B cell (primary cell): ENCODE measurements at regions of chr7 and their contacts with region 1.

Region 1: DNA sequence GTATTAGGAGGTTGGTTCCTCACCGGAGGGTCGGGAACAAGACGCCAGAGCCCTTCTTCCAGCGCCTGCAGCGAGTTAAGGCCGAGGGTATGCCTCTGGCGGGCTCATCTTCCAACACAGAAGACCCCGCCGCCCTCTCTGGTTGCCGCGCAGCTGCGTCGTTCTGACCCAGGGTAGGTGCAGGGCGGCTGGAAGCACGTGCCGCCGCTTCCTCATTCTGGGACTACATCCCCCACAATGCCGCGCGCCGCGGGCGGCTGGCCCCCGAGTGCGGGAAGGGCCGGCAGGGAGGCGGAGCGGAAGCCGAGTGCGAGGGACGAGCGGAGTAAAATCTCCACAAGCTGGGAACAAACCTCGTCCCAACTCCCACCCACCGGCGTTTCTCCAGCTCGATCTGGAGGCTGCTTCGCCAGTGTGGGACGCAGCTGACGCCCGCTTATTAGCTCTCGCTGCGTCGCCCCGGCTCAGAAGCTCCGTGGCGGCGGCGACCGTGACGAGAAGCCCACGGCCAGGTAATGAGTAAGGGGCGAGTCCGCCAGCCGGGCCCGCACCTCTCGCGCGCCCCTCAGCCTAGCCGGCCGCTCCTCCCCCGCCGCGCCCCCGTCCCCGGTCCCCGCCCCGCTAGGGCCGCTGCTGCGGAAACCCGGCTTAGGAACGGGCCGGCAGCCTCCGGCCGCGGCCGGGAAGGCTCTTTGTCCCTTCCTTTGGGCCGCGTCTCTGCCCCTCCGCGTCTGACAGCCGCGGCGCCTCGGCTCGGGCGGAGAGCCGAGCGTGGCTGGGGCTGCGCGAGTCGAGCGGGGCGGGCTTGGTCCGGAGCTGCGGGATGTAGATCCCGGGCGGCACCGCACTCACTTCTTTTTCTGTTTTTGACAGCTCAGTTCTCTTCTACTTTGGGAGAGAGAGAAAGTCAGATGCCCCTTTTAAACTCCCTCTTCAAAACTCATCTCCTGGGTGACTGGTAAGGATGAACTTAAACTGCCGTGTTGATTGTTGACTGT is at the start of gene CCDC126:
- DNase-seq: peak; percentile 89
- ATAC-seq: peak; percentile 92
- H3K4me3 ChIP-seq: peak within 1 kb of the TSS; percentile 79 to 93 (median 88)
- H3K4me3 Mint-ChIP-seq: peak within 1 kb of the TSS; percentile 91
- H3K27ac ChIP-seq: peak within 1 kb of the TSS; percentile 70 to 80
- H3K27ac Mint-ChIP-seq: peak within 1 kb of the TSS; percentile 80
- H3K4me1 ChIP-seq: peaks cover 15 to 58% of the 10 kb centered on the region in 2 donors
- H3K4me1 Mint-ChIP-seq: peaks cover 41% of the 10 kb centered on the region
- H3K27me3 ChIP-seq: no peaks in the 10 kb centered on the region
- H3K27me3 Mint-ChIP-seq: no peaks in the 10 kb centered on the region
- CTCF ChIP-seq: no peak
- total RNA-seq, gene CCDC126: 15.0 and 18.0 TPM in 2 replicates

Region 2: GRCh38 chr7:21945454-21946227 is 1651.8 kb before region 1 on chr7 and contains the start of gene CDCA7L:
- CTCF ChIA-PET with region 1: no interaction called
- POLR2A ChIA-PET with region 1: no interaction called
- intact Hi-C with region 1: loop called (anchors 5 kb)
- DNase-seq: peak; percentile 96
- ATAC-seq: peak; percentile 80
- H3K4me3 ChIP-seq: peak within 1 kb of the TSS; percentile 74 to 95 (median 81)
- H3K4me3 Mint-ChIP-seq: peak within 1 kb of the TSS; percentile 97
- H3K27ac ChIP-seq: peak within 1 kb of the TSS; percentile 97 to 98
- H3K27ac Mint-ChIP-seq: peak within 1 kb of the TSS; percentile 99
- H3K4me1 ChIP-seq: peaks cover 56 to 63% of the 10 kb centered on the region in 2 donors
- H3K4me1 Mint-ChIP-seq: peaks cover 65% of the 10 kb centered on the region
- H3K27me3 ChIP-seq: no peaks in the 10 kb centered on the region
- H3K27me3 Mint-ChIP-seq: no peaks in the 10 kb centered on the region
- CTCF ChIP-seq: peak; percentile 17
- total RNA-seq, gene CDCA7L: 126 and 129 TPM in 2 replicates

Region 3: DNA sequence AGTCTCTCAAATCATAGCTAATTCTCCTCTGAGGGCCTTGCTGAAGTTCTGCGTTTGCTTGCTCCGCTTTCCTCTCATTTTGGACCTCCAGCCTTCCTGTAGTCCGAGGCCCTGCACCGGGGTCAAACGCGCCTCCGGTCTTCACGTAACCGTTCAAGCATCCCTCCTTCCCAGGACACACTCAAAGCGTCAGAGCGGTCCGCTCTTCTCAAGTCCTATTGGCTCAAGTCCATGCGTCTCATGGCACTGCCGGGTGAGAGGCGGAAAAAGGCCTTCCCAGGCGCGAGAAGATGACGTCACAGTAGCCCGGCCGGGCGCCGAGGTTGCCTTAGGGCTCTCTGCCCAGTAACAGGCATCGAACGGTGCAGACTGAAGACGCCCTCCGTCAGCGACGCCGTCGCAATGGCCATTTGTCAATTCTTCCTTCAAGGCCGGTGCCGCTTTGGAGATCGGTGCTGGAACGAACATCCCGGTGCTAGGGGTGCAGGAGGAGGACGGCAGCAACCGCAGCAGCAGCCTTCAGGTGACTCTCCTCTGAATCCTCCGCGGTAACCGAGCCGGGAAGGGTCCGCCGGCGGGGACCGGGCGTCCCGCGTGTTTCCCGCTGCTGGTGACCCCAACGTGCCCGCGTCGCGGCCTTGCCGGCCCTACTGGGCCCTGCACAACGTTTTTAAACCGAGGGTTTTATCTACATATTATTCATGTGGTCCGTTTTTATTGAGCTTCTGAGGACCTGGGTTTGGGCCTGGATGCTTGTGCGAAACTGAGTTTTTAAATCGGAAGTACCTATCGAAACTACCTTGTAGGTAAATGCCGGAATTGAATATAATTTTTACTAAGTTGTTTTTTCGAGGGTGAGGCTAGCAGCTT is 415.5 kb before region 1 on chr7 and contains the start of gene NUP42:
- CTCF ChIA-PET with region 1: no interaction called
- POLR2A ChIA-PET with region 1: no interaction called
- intact Hi-C with region 1: loop called (anchors 1 kb)
- DNase-seq: peak; percentile 98
- ATAC-seq: peak; percentile 89
- H3K4me3 ChIP-seq: peak within 1 kb of the TSS; percentile 77 to 99 (median 87)
- H3K4me3 Mint-ChIP-seq: peak within 1 kb of the TSS; percentile 96
- H3K27ac ChIP-seq: peak within 1 kb of the TSS; percentile 92 to 98
- H3K27ac Mint-ChIP-seq: peak within 1 kb of the TSS; percentile 98
- H3K4me1 ChIP-seq: peaks cover 17 to 20% of the 10 kb centered on the region in 2 donors
- H3K4me1 Mint-ChIP-seq: peaks cover 37% of the 10 kb centered on the region
- H3K27me3 ChIP-seq: no peaks in the 10 kb centered on the region
- H3K27me3 Mint-ChIP-seq: no peaks in the 10 kb centered on the region
- CTCF ChIP-seq: no peak
- total RNA-seq, gene NUP42: 49.2 and 58.8 TPM in 2 replicates

Region 4: DNA sequence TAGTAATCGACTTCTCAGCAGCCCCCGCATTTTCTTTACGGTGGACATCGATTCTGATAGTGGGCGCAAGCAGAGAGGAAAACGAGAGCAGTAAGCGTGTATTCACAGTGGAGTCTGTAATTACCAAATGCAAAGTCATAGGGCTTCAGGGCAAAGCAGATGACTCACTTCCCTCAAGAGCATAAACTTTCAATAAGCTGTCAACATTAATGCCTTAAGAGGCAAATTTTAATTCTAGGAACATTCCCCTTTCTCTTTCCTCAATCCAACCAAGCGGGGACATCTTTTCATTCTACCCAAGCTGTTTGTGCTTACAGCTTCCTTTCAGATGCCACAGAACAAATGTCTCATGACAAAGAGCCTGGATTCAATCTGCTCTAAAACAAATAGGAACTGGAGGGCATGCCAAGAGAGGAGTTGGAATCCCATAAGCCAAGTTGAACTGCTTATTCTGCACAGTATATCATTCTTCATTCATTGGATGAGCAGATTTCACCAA is 249.7 kb before region 1 on chr7:
- CTCF ChIA-PET with region 1: no interaction called
- POLR2A ChIA-PET with region 1: no interaction called
- intact Hi-C with region 1: loop called (anchors 1 kb)
- DNase-seq: no peak
- ATAC-seq: no peak
- H3K4me3 ChIP-seq: no peak overlapping the region
- H3K4me3 Mint-ChIP-seq: peak overlapping the region; percentile 72
- H3K27ac ChIP-seq: no peak overlapping the region
- H3K27ac Mint-ChIP-seq: peak overlapping the region; percentile 75
- H3K4me1 ChIP-seq: peaks cover 15 to 19% of the 10 kb centered on the region in 2 donors
- H3K4me1 Mint-ChIP-seq: peaks cover 30% of the 10 kb centered on the region
- H3K27me3 ChIP-seq: no peaks in the 10 kb centered on the region
- H3K27me3 Mint-ChIP-seq: no peaks in the 10 kb centered on the region
- CTCF ChIP-seq: no peak

Region 5: DNA sequence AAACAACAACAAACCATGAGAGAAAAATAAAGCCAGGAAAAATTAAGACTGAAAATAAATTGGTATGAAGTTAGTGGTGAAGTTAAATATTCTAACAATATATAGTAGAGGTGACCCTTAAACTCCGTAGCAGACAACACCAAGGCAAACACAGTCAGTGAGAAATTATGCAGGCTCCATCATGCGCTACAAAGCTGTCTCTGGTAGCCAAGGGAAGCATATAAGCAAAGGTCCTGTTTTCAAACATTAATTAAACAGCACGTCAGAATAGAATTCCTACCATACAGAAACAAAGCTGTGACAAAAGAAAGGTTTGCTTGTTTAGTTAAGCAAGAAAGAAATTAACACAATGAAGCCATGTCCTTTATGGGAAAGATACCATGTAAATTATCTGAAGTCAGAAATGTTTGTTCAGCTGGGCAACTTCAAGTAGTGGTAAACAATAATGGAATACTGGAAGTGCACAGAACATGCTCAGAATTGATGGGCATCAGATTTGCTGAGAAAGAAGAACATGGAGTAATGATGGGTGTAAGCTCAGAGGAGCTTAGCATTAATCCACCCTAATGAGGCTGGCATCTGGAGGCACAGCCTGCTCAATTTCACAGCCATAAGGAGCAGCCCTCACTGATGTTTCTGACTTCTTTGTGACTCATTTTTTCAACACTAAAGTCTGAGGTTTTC is 202.8 kb before region 1 on chr7:
- CTCF ChIA-PET with region 1: no interaction called
- POLR2A ChIA-PET with region 1: no interaction called
- intact Hi-C with region 1: no loop called
- DNase-seq: no peak
- ATAC-seq: no peak
- H3K4me3 ChIP-seq: no peak overlapping the region
- H3K4me3 Mint-ChIP-seq: no peak overlapping the region
- H3K27ac ChIP-seq: no peak overlapping the region
- H3K27ac Mint-ChIP-seq: no peak overlapping the region
- H3K4me1 ChIP-seq: no peaks in the 10 kb centered on the region
- H3K4me1 Mint-ChIP-seq: no peaks in the 10 kb centered on the region
- H3K27me3 ChIP-seq: peaks cover 0 to 4% (median 0%) of the 10 kb centered on the region in 4 experiments
- H3K27me3 Mint-ChIP-seq: no peaks in the 10 kb centered on the region
- CTCF ChIP-seq: no peak

Region 6: DNA sequence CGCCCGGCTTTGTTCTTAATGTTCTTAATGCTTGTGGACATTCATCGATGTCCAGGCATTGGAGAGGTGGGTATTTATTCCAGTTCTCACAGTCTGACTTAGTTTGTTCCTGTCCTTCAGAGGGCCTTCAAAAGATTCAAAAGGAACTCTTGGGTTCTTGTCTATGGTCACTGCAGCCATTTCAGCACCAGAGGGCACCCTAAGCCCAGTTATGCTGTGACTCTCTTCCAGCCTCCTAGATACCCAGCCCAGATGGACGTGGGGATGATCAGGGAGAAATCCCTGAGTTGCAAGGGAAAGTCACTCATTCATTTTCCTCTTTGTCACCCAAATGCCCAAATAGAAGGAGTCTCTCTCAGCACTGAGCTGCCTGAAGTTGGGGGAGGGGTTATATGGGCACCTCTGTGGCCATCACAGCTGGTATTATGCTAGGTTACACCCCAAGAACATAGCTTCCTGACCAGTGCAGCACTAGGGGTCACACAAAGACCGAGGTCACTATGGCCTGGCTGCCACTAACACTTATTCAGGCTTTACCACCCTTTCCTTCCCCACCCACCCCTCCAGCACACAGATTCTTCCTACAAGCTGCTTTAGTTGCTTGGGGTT is 26.7 kb before region 1 on chr7:
- CTCF ChIA-PET with region 1: interaction called, 3 read pairs
- POLR2A ChIA-PET with region 1: no interaction called
- intact Hi-C with region 1: loop called (anchors 1 kb)
- DNase-seq: peak; percentile 77
- ATAC-seq: peak; percentile 91
- H3K4me3 ChIP-seq: no peak overlapping the region
- H3K4me3 Mint-ChIP-seq: peak overlapping the region; percentile 57
- H3K27ac ChIP-seq: no peak overlapping the region
- H3K27ac Mint-ChIP-seq: no peak overlapping the region
- H3K4me1 ChIP-seq: no peaks in the 10 kb centered on the region
- H3K4me1 Mint-ChIP-seq: peaks cover 3% of the 10 kb centered on the region
- H3K27me3 ChIP-seq: peaks cover 0 to 4% (median 0%) of the 10 kb centered on the region in 4 experiments
- H3K27me3 Mint-ChIP-seq: peaks cover 10% of the 10 kb centered on the region
- CTCF ChIP-seq: peak; percentile 84

Region 7: GRCh38 chr7:23907012-23907411 is 309.6 kb after region 1 on chr7:
- CTCF ChIA-PET with region 1: no interaction called
- POLR2A ChIA-PET with region 1: no interaction called
- intact Hi-C with region 1: no loop called
- DNase-seq: no peak
- ATAC-seq: no peak
- H3K4me3 ChIP-seq: no peak overlapping the region
- H3K4me3 Mint-ChIP-seq: no peak overlapping the region
- H3K27ac ChIP-seq: no peak overlapping the region
- H3K27ac Mint-ChIP-seq: no peak overlapping the region
- H3K4me1 ChIP-seq: no peaks in the 10 kb centered on the region
- H3K4me1 Mint-ChIP-seq: no peaks in the 10 kb centered on the region
- H3K27me3 ChIP-seq: peaks cover 0 to 2% (median 0%) of the 10 kb centered on the region in 4 experiments
- H3K27me3 Mint-ChIP-seq: peaks cover 15% of the 10 kb centered on the region
- CTCF ChIP-seq: no peak

Region 8: DNA sequence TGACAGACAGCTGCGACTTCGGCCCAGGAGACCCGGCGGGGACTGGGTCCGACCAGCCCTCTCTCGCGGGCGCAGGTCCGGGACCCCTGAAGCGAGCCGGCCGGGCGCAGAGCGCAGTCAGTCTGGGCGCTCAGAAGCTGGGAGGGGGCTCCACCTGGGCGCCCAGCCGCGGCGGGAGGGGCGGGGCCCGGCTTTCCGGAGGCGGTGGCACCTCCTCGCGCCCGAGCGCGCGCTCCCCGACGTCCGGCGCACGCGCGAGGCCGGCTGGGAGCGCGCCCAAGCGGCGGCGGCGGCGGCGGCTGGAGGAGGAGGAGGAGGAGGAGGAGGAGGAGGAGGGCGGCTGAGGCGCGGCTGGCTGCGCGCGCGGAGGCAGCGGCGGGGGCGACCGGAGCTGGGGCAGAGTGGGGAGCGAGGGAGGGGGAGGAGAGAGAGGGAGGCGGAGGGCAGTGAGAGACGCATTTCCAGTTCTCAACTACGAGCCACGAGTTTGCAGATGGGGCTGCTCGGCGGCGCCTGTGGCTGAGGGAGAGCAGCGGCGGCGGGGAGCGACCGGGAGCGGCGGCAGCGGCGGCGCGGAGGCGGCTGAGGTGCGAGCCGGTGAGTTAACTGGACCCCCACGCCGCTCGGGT is 975.7 kb after region 1 on chr7 and contains the start of gene PALS2:
- CTCF ChIA-PET with region 1: no interaction called
- POLR2A ChIA-PET with region 1: no interaction called
- intact Hi-C with region 1: loop called (anchors 5 kb)
- DNase-seq: peak; percentile 90
- ATAC-seq: peak; percentile 79
- H3K4me3 ChIP-seq: peak within 1 kb of the TSS; percentile 63 to 88 (median 84)
- H3K4me3 Mint-ChIP-seq: peak within 1 kb of the TSS; percentile 91
- H3K27ac ChIP-seq: peak within 1 kb of the TSS; percentile 70 to 73
- H3K27ac Mint-ChIP-seq: peak within 1 kb of the TSS; percentile 89
- H3K4me1 ChIP-seq: peaks cover 24 to 29% of the 10 kb centered on the region in 2 donors
- H3K4me1 Mint-ChIP-seq: peaks cover 37% of the 10 kb centered on the region
- H3K27me3 ChIP-seq: peaks cover 0 to 3% (median 0%) of the 10 kb centered on the region in 4 experiments
- H3K27me3 Mint-ChIP-seq: peaks cover 5% of the 10 kb centered on the region
- CTCF ChIP-seq: no peak
- total RNA-seq, gene PALS2: 47.8 and 54.2 TPM in 2 replicates